ENCODE measurements at regions of chr1 and their contacts with region 1.

Region 1: DNA sequence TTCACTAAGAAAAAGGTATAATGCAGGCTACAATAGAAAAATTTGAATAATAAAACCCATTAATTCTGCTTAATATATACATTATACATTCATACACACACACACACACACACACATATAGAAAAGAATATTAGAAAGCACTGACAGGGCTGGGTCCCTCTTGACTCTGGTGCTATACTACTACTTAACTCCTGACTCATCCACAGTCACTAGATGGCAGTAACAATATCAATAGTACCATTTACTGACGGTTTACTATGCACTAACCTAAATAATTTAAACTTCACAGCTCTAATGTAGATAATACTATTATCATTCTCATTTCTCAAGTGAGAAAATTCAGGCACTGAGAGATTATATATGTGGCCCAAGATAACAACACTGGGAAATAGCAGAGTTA is 87.5 kb downstream of the COP1 start:
- DNase-seq: peak; percentile 33
- ATAC-seq: peak; percentile 89
- H3K4me3 ChIP-seq: no peak overlapping the region
- H3K27ac ChIP-seq: no peak overlapping the region
- H3K4me1 ChIP-seq: no peaks in the 10 kb centered on the region
- H3K27me3 ChIP-seq: no peaks in the 10 kb centered on the region
- CTCF ChIP-seq: peak; percentile 58

Region 2: DNA sequence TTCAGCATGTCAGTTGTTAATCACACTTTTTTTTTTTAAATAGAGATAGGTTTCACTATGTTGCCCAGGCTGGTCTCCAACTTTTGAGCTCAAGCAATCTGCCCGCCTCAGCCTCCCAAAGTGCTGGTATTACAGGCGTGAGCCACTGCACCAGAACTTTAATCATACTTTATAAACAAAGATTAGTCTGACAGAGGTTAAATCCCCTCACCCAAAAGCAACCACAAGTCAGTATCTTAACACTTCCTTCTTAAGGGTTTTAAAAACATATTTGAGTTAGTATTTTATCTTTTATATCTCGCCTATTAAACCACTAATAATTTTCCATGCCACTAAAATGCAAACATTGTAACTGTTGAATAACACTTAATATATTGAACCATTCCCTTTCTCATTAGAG is 17.3 kb after region 1 on chr1:
- CTCF ChIA-PET with region 1: interaction called, 13 read pairs
- POLR2A ChIA-PET with region 1: no interaction called
- intact Hi-C with region 1: no loop called
- DNase-seq: no peak
- ATAC-seq: no peak
- H3K4me3 ChIP-seq: no peak overlapping the region
- H3K27ac ChIP-seq: no peak overlapping the region
- H3K4me1 ChIP-seq: no peaks in the 10 kb centered on the region
- H3K27me3 ChIP-seq: no peaks in the 10 kb centered on the region
- CTCF ChIP-seq: no peak

Region 3: GRCh38 chr1:176157995-176158394 is 38.4 kb after region 1 on chr1:
- CTCF ChIA-PET with region 1: no interaction called
- POLR2A ChIA-PET with region 1: no interaction called
- intact Hi-C with region 1: no loop called
- DNase-seq: no peak
- ATAC-seq: no peak
- H3K4me3 ChIP-seq: no peak overlapping the region
- H3K27ac ChIP-seq: no peak overlapping the region
- H3K4me1 ChIP-seq: no peaks in the 10 kb centered on the region
- H3K27me3 ChIP-seq: no peaks in the 10 kb centered on the region
- CTCF ChIP-seq: no peak

Region 4: GRCh38 chr1:176183618-176184017 is 64.1 kb after region 1 on chr1:
- CTCF ChIA-PET with region 1: no interaction called
- POLR2A ChIA-PET with region 1: no interaction called
- intact Hi-C with region 1: no loop called
- DNase-seq: no peak
- ATAC-seq: peak; percentile 37; the same call in 1 of the 2 replicates
- H3K4me3 ChIP-seq: no peak overlapping the region
- H3K27ac ChIP-seq: no peak overlapping the region
- H3K4me1 ChIP-seq: no peaks in the 10 kb centered on the region
- H3K27me3 ChIP-seq: no peaks in the 10 kb centered on the region
- CTCF ChIP-seq: no peak

Measured in PC-3 (cell line).